ENCODE measurements at regions of chr19 and their contacts with region 1.

Region 1: GRCh38 chr19:10575011-10575716 is 6.4 kb upstream of the CDKN2D start:
- DNase-seq: no peak
- ATAC-seq: no peak
- H3K4me3 ChIP-seq: no peak overlapping the region
- H3K27ac ChIP-seq: no peak overlapping the region
- H3K4me1 ChIP-seq: peaks cover 0 to 9% (median 0%) of the 10 kb centered on the region in 12 donors
- H3K27me3 ChIP-seq: no peaks in the 10 kb centered on the region
- CTCF ChIP-seq: no peak
- POLR2A ChIP-seq: no peak

Region 2: GRCh38 chr19:10486538-10486937 is 88.6 kb before region 1 on chr19:
- intact Hi-C with region 1: loop called in 2 of 10 experiments (anchors 2 to 5 kb)
- DNase-seq: no peak
- ATAC-seq: peak in 1 of 4 donors; percentile 21
- H3K4me3 ChIP-seq: no peak overlapping the region
- H3K27ac ChIP-seq: no peak overlapping the region
- H3K4me1 ChIP-seq: peaks cover 0 to 13% (median 0%) of the 10 kb centered on the region in 12 donors
- H3K27me3 ChIP-seq: no peaks in the 10 kb centered on the region
- CTCF ChIP-seq: no peak
- POLR2A ChIP-seq: no peak